MCF 10A (cell line): ENCODE measurements at regions of chr19 and their contacts with region 1.

Region 1: DNA sequence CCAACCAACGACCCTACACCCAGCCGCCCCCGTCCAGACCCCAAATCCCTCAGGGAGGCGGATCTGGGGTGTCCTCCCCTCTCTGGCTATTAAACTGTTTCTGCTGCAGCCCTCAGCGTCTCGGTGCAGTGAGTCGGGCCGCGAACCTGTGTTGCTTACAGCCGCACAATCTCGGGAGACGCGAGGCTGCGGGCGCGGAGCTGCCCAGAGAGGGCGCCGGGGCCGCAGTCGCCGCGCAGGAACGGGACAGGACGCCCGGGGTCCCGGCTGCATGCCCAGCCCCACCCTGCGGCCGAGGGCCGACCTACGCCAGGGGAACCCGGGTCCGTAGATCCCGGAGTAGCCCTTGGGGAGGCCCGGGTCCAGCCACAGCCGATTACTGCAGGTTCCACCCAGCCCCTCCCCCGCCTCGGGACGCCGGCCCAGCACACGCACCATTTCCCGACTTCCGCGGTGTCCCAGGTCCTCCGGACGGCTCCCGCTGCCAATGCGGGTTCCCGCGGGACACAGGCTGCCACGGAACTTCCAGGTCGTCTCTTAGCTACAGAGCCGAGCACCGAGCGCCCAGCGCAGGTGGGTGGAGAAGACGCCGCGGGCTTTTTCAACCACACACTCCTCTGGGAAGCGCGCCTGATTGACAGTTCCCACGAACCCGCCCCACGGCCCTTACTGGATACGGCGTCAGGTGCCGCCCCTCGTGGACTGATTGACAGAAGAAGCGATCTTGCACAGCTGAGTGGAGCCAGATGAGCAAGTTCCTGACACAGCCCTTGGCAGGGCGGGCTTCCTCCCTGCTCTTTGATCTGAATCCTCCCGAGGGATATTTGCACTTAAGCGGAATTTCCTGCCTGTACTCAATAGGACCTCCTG is at the start of gene ZNF799:
- DNase-seq: peak; percentile 99
- H3K4me3 Mint-ChIP-seq: peak within 1 kb of the TSS; percentile 87
- H3K27ac Mint-ChIP-seq: peak within 1 kb of the TSS; percentile 69
- H3K4me1 Mint-ChIP-seq: no peaks in the 10 kb centered on the region
- H3K27me3 Mint-ChIP-seq: no peaks in the 10 kb centered on the region
- CTCF ChIP-seq: no peak
- total RNA-seq, gene ZNF799: 1.0 and 1.8 TPM in 2 replicates

Region 2: DNA sequence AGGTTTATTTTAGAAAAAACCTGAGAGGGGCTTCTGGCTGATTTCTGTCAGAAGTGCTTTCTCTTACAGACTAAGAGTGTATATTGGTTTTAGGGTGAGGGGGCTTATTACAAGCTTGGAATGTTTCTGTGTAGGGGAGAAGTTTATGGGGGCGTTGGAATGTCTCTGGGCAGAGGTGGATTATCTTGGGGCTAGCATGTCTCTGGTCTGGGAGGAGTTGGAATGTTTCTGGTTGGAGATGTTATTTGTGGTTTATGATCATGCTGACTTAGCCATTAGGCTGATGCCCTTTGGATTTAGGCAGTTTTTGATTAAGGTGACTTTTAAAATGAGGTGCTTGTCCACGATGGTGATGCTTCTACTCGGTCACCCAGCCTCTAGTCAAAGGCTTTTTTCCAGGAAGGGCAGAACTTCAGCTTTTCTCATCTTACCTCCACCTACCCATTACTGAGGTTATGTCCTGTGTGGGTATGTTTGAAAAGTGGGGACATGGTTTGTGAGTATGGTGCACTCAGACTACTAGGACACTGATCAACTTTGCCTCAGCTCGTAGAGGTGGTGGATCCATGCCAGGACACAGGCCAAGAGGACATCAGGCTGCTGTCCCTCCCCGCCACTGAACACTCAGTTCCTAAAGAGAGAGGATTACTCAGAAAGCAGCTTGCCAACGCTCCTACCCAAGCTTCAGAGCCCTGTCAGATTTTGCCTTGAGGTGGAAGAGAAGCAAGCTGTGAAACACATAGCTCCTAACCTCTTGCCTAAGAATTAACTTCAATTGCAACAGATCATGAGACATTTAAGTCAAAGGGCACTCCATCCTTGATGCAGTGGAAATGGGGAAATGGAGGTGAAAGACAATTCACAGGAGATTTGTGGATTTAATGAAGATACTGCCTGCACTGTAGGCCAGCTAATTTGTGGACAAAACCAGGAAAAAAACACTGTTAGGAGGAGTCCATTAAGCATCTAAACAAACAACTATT is 169.8 kb before region 1 on chr19:
- CTCF ChIA-PET with region 1: no interaction called
- POLR2A ChIA-PET with region 1: interaction called, 11 read pairs
- intact Hi-C with region 1: no loop called
- DNase-seq: no peak
- H3K4me3 Mint-ChIP-seq: no peak overlapping the region
- H3K27ac Mint-ChIP-seq: peak overlapping the region; percentile 55
- H3K4me1 Mint-ChIP-seq: no peaks in the 10 kb centered on the region
- H3K27me3 Mint-ChIP-seq: no peaks in the 10 kb centered on the region
- CTCF ChIP-seq: no peak

Region 3: GRCh38 chr19:12287958-12288500 is 112.8 kb before region 1 on chr19:
- CTCF ChIA-PET with region 1: interaction called, 3 read pairs
- POLR2A ChIA-PET with region 1: interaction called, 6 read pairs
- intact Hi-C with region 1: loop called (anchors 2 kb)
- DNase-seq: no peak
- H3K4me3 Mint-ChIP-seq: no peak overlapping the region
- H3K27ac Mint-ChIP-seq: no peak overlapping the region
- H3K4me1 Mint-ChIP-seq: peaks cover 11% of the 10 kb centered on the region
- H3K27me3 Mint-ChIP-seq: no peaks in the 10 kb centered on the region
- CTCF ChIP-seq: no peak

Region 4: DNA sequence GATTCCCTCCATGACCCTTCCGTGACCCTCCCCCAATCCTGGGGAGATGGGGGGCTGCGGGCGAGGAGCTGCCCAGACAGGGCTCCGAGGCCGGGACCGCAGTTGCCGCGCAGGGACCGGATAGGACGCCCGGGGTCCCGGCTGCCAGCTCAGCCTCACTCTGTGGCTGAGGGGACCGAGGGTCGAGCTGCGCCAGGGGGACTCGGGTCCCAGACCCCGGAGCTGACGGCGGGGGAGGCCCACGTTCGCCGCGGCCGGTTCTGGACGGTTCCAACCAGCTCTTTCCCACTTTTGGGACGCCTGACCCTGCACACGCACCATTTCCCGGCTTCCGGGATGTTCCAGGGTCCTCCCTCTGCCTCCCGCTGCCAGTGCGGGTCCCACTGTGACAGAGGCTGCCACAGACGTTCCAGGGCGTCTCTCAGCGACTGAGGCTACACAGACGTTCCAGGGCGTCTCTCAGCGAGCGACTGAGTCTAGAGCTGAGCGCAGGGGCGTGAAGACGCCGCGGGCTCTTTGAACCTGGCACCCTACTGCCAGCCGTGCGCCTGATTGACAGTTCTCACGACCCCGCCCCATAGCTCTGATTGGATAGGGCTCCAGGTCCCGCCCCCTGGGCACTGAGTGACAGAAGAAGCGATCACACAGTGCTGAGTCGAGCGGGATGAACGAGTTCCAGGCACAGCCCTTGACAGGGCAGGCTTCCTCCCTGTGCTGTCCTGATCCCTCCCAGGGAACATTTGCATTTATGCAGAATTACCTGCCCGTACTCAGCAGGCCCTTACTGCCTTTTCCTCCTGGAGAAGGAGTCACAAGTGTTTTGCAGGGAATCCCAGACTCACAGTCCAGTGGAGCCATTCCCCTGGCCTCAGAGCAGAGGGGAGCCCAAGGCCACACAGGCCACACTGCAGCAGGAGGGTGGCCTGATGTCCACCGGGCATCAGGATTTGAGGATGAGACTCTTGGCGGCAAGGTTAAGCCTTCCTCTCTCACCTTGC is 67.4 kb before region 1 on chr19 and contains the start of gene ZNF563:
- CTCF ChIA-PET with region 1: no interaction called
- POLR2A ChIA-PET with region 1: interaction called, 11 read pairs
- intact Hi-C with region 1: loop called (anchors 2 kb)
- DNase-seq: peak; percentile 87
- H3K4me3 Mint-ChIP-seq: peak within 1 kb of the TSS; percentile 97
- H3K27ac Mint-ChIP-seq: peak within 1 kb of the TSS; percentile 89
- H3K4me1 Mint-ChIP-seq: peaks cover 11% of the 10 kb centered on the region
- H3K27me3 Mint-ChIP-seq: no peaks in the 10 kb centered on the region
- CTCF ChIP-seq: no peak
- total RNA-seq, gene ZNF563: 1.1 and 1.3 TPM in 2 replicates

Region 5: DNA sequence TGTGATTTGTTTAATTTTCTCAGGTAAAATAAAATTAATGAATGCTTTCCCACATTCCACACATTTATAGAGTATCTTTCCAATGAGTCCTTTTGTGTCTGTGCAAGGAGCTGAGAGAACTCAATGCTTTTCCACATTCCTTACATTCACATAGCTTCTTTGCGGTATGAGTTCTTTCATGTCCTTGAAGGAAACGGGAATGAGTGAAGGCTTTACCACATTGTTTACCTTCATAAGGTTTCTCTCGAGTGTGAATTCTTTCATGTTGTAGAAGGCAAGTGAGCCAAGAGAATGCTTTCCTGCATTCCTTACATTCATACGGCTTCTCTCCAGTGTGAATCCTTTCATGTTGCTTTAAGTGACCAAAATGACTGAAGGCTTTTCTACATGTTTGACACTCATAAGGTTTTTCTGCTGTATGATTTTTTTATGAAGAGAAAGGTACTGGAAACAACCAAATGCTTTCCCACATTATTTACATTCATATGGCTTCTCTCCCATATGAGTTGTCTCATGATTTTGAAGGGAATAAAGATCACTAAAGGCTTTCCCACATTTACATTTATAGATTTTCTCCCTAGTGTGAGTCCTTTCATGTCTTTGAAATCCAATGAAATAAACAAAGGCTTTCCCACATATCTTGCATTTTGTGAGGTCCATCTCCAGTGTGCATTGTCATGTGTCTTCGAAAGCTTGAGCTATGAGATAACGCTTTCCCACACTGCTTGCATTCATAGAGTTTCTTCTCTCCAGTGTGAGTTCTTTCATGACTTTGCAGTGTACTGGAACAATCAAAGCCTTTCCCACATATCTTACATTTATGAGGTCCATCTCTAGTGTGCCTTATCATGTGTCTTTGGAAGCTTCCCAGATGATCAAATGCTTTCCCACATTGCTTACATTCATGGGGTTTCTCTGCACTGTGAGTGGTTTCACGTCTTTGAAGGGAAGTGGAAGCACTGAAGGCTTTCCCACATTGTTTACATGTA is 20.8 kb before region 1 on chr19:
- CTCF ChIA-PET with region 1: no interaction called
- POLR2A ChIA-PET with region 1: no interaction called
- intact Hi-C with region 1: no loop called
- DNase-seq: no peak
- H3K4me3 Mint-ChIP-seq: no peak overlapping the region
- H3K27ac Mint-ChIP-seq: no peak overlapping the region
- H3K4me1 Mint-ChIP-seq: no peaks in the 10 kb centered on the region
- H3K27me3 Mint-ChIP-seq: no peaks in the 10 kb centered on the region
- CTCF ChIP-seq: no peak

Region 6: GRCh38 chr19:12440541-12441316 is 39.9 kb after region 1 on chr19 and contains the start of gene ZNF443:
- CTCF ChIA-PET with region 1: no interaction called
- POLR2A ChIA-PET with region 1: interaction called, 21 read pairs
- intact Hi-C with region 1: loop called (anchors 2 kb)
- DNase-seq: peak; percentile 99
- H3K4me3 Mint-ChIP-seq: peak within 1 kb of the TSS; percentile 92
- H3K27ac Mint-ChIP-seq: peak within 1 kb of the TSS; percentile 72
- H3K4me1 Mint-ChIP-seq: no peaks in the 10 kb centered on the region
- H3K27me3 Mint-ChIP-seq: no peaks in the 10 kb centered on the region
- CTCF ChIP-seq: no peak
- total RNA-seq, gene ZNF443: 0.79 and 1.6 TPM in 2 replicates

Region 7: DNA sequence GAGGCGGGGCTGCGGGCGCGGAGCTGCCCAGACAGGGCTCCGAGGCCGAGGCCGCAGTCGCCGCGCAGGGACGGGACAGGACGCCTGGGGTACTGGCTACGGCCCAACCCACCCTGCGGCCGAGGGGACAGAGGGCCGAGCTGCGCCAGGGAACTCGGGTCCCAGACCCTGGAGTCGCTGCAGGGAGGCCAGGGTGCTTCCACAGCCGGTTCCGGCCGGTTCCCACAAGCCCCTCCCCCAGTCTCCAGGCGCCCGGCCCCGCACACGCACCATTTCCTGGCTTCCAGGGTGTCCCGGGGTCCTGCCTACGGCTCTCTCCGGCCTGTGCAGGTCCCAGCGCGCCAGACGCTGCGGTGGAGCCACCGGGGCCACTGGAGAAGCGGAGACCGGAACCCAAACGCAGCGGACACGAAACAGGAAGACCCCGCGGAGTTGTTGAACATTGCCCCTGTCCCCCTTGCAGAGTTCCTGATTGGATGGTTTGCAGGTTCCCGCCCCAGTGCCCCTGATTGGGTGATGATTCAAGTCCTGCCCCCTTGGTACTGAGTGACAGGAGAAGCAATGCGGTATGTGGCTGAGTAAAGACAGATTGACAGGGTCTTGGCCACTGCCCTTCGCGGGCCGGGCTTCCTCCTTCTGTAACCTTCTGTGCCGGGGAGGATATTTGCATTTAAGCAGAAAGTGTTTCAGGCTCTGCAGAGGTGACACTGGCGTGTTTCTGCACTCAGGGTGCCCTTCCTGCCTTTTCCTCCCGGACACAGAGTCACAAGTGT is 150.4 kb after region 1 on chr19 and contains the start of gene ZNF564:
- CTCF ChIA-PET with region 1: no interaction called
- POLR2A ChIA-PET with region 1: interaction called, 4 read pairs
- intact Hi-C with region 1: loop called (anchors 2 kb)
- DNase-seq: peak; percentile 99
- H3K4me3 Mint-ChIP-seq: peak within 1 kb of the TSS; percentile 90
- H3K27ac Mint-ChIP-seq: peak within 1 kb of the TSS; percentile 90
- H3K4me1 Mint-ChIP-seq: peaks cover 6% of the 10 kb centered on the region
- H3K27me3 Mint-ChIP-seq: no peaks in the 10 kb centered on the region
- CTCF ChIP-seq: no peak
- total RNA-seq, gene ZNF564: 4.4 and 5.1 TPM in 2 replicates